ENCODE measurements at regions of chr6 and their contacts with region 1.

Region 1: GRCh38 chr6:134235937-134236751 is 81.8 kb downstream of the SGK1 start:
- DNase-seq: no peak
- H3K4me3 Mint-ChIP-seq: peak overlapping the region; percentile 17
- H3K27ac Mint-ChIP-seq: peak overlapping the region; percentile 85
- H3K4me1 Mint-ChIP-seq: peaks cover 52% of the 10 kb centered on the region
- H3K27me3 Mint-ChIP-seq: no peaks in the 10 kb centered on the region

Region 2: DNA sequence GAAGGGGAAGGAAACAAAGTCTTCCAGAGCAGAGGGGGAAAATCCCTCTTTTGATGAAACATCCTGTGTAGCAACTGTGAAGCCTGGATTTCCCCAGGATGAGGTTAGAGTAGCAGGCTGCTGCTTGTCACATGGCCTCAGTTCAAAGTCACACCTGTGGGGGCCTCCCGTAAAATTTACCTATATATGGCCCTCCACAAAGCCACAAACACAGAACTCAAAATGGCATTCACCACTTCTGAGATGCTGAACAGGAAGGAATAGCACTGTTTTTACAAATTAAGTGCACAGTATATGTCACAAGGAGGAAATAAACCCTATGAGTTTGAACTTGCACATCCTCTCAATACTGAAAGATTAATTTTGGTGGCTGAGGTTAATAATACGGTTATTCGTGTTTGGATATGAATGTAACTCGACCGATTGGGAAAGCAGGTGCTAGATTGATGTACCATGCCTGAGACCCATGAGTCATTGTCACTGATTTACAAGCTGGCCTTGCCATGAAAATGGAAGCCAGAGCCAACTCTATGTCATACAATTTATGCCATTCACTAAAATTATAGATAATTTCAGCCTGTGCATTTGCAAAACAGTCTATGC is 11.2 kb after region 1 on chr6:
- intact Hi-C with region 1: loop called (anchors 1 kb)
- DNase-seq: peak; percentile 82
- H3K4me3 Mint-ChIP-seq: peak overlapping the region; percentile 37
- H3K27ac Mint-ChIP-seq: peak overlapping the region; percentile 91
- H3K4me1 Mint-ChIP-seq: peaks cover 58% of the 10 kb centered on the region
- H3K27me3 Mint-ChIP-seq: no peaks in the 10 kb centered on the region

Region 3: GRCh38 chr6:134373282-134373922 is 137.3 kb after region 1 on chr6:
- intact Hi-C with region 1: loop called (anchors 1 kb)
- DNase-seq: no peak
- H3K4me3 Mint-ChIP-seq: peak overlapping the region; percentile 47
- H3K27ac Mint-ChIP-seq: peak overlapping the region; percentile 57
- H3K4me1 Mint-ChIP-seq: peaks cover 46% of the 10 kb centered on the region
- H3K27me3 Mint-ChIP-seq: no peaks in the 10 kb centered on the region

Region 4: GRCh38 chr6:134379086-134379485 is 142.9 kb after region 1 on chr6:
- intact Hi-C with region 1: loop called (anchors 1 kb)
- DNase-seq: peak; percentile 49
- H3K4me3 Mint-ChIP-seq: peak overlapping the region; percentile 38
- H3K27ac Mint-ChIP-seq: peak overlapping the region; percentile 82
- H3K4me1 Mint-ChIP-seq: peaks cover 47% of the 10 kb centered on the region
- H3K27me3 Mint-ChIP-seq: no peaks in the 10 kb centered on the region

Measured in activated T-helper 1 cell treated with anti-CD3 and anti-CD28 coated beads, Interleukin-12 subunit alpha, Interleukin-12 subunit beta, Interleukin-2, Interleukin-4 antibody, amounts not matched to agents 30 ng/mL and 10 ng/mL and 1 ng/mL, durations not matched to agents 14 hours and 24 hours and 36 hours (primary cell).